Activated CD4-positive, alpha-beta memory T cell treated with anti-CD3 and anti-CD28 coated beads for 36 hours (primary cell): ENCODE measurements at regions of chr9 and their contacts with region 1.

Region 1: GRCh38 chr9:112844771-112845542 is 45.7 kb downstream of the SLC46A2 start:
- DNase-seq: peak; percentile 86
- H3K4me3 Mint-ChIP-seq: no peak overlapping the region
- H3K27ac Mint-ChIP-seq: no peak overlapping the region
- H3K4me1 Mint-ChIP-seq: peaks cover 15% of the 10 kb centered on the region
- H3K27me3 Mint-ChIP-seq: no peaks in the 10 kb centered on the region

Region 2: DNA sequence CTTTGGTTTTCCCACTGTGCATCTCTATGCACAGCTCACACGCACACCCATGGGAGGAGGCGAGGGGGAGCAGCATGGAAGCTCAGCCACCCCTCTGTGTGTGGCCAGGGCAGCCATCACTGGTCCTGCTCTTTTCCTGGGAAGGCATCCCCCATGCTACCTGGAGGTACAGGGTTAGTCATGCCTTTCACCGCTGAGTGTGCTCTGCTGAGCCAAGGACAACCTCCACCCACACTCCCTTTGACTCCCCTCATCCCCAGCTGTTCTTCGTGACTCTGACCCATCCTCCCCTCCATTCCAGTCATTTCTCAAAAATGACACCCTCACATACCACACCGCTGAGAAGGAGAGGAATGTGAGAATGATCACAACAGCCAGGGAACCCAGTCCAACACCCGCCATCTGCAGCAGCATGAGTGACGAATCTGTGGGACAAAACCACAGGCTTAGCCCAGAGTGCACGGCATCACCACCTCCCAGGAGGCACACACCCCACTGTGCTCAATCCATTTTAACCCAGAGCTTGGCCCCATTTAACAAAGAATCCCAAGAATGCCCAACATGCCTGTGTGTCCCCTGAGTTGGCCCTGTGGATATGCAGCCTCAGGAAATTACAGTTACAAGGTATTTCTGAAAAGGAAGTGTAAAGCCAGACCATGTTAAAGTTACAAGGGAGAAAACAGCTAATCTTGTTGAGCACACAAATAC is 803.3 kb before region 1 on chr9:
- CTCF ChIA-PET with region 1: no interaction called
- POLR2A ChIA-PET with region 1: no interaction called
- intact Hi-C with region 1: no loop called
- DNase-seq: peak; percentile 24
- H3K4me3 Mint-ChIP-seq: no peak overlapping the region
- H3K27ac Mint-ChIP-seq: no peak overlapping the region
- H3K4me1 Mint-ChIP-seq: peaks cover 27% of the 10 kb centered on the region
- H3K27me3 Mint-ChIP-seq: peaks cover 1% of the 10 kb centered on the region

Region 3: DNA sequence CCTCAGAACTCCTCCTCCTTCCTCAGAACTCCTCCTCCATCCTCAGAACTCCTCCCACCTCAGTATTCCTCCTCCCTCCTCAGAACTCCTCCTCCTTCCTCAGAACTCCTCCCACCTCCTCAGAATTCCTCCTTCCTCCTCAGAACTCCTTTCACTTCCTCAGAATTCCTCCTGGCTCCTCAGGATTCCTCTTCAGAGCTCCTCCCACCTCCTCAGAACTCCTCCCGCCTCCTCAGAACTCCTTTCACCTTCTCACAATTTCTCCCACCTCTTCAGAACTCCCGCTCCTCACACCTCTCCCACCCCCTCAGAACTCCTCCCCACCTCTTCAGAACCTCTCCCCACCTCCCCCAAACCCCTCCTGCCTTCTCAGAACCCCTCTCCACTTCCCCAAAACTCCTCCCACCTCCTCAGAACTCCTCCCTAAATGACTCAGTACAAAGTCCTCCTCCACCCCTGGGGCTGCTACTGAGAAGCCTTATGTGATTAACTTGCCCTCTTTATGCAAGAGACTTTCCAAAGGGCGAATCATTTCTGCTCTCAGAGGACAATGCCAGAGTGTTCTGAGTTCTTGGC is 22.5 kb after region 1 on chr9:
- CTCF ChIA-PET with region 1: interaction called, 3 read pairs
- POLR2A ChIA-PET with region 1: no interaction called
- intact Hi-C with region 1: loop called (anchors 2 kb)
- DNase-seq: peak; percentile 63
- H3K4me3 Mint-ChIP-seq: no peak overlapping the region
- H3K27ac Mint-ChIP-seq: peak overlapping the region; percentile 65
- H3K4me1 Mint-ChIP-seq: peaks cover 16% of the 10 kb centered on the region
- H3K27me3 Mint-ChIP-seq: no peaks in the 10 kb centered on the region

Region 4: GRCh38 chr9:112887381-112887780 is 42.4 kb after region 1 on chr9:
- CTCF ChIA-PET with region 1: interaction called, 9 read pairs
- POLR2A ChIA-PET with region 1: no interaction called
- intact Hi-C with region 1: loop called (anchors 1 kb)
- DNase-seq: peak; percentile 35
- H3K4me3 Mint-ChIP-seq: no peak overlapping the region
- H3K27ac Mint-ChIP-seq: no peak overlapping the region
- H3K4me1 Mint-ChIP-seq: no peaks in the 10 kb centered on the region
- H3K27me3 Mint-ChIP-seq: peaks cover 24% of the 10 kb centered on the region

Region 5: DNA sequence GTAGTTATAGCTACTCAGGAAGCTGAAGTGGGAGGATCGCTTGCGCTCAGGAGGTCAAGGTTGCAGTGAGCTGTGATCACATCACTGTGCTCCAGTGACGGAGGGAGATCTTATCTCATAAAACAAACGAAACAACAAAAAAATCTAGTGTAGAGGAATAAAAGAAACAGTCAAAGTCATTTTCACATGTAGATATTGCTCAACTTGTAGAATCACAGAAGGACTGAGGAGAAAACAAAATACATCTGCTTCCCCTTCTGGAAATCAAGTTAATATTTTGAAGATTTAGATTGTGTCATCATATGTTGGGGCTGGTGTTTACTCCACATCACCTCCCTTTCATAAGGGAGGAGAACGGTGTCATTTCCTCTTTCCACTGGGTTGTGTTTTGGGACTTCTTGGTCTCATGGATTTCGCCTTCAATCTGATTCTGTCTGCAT is 53.9 kb after region 1 on chr9:
- CTCF ChIA-PET with region 1: interaction called, 114 read pairs
- POLR2A ChIA-PET with region 1: no interaction called
- intact Hi-C with region 1: loop called (anchors 1 kb)
- DNase-seq: no peak
- H3K4me3 Mint-ChIP-seq: no peak overlapping the region
- H3K27ac Mint-ChIP-seq: no peak overlapping the region
- H3K4me1 Mint-ChIP-seq: peaks cover 3% of the 10 kb centered on the region
- H3K27me3 Mint-ChIP-seq: peaks cover 30% of the 10 kb centered on the region